AG04449 (cell line): ENCODE measurements at regions of chr12 and their contacts with region 1.

Region 1: DNA sequence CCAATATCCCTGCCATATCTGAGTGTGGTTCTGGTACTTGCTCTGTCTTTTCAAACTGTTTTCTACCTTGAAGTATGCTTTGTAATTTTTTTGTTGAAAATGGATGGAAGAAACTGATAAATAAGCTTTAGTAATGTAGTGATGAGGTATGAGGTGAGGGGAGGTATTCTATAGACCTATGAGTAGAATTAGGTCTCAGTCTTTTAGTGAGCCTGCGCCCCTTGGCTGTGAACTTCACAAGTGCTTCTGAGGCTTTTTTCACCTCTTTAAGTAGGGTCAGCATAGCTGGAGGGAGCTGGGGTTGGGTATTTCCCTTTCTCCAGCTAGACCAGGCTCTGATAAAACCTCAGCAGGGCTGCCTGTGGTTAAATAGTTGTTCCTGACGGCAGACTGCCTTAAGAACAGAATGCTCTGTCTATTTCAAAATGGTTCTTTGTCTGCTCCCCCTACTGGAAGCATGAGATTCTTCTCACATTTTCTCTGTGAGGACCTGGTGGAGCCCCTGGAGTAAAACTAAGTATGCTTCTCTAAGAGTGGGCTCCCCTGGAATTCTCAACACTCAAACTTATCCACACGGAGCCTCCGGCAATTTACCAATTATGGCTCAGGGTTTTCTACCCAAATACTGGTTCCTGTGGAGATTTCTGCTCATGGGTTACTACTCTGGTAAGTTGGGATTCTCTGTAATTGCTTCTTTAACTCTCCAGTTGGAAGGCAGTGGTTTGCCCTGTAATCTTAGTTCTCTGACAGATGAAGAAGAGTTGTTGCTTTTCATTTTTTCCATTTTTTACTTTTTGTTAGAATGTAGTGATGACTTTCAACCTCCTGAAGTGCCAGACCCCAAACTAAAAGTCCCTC is 13.1 kb downstream of the KRT5 start:
- DNase-seq: peak; percentile 51
- H3K4me3 ChIP-seq: no peak overlapping the region
- CTCF ChIP-seq: peak; percentile 46

Region 2: DNA sequence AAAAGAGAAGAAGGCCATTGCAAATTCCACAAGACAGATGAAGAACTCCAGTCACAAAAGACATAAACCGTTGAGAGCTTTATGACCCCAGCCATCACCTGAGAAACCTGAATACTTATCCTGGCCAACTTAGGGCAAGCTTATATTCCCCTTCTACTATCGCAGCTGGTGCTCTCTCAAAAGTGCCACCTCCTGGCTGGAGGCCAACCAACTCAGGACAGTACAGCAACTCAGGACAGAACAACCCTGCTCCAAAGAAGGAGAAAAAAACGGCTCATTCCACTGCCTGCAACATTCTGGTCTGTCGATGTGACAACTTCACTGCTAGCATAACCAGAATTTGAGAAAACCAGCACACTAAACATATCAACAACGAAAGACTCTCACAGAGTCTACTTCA is 45.4 kb before region 1 on chr12:
- CTCF ChIA-PET with region 1: no interaction called
- POLR2A ChIA-PET with region 1: no interaction called
- DNase-seq: no peak
- H3K4me3 ChIP-seq: no peak overlapping the region
- CTCF ChIP-seq: no peak

Region 3: GRCh38 chr12:52495389-52495788 is 11.7 kb before region 1 on chr12:
- CTCF ChIA-PET with region 1: interaction called, 18 read pairs
- POLR2A ChIA-PET with region 1: no interaction called
- DNase-seq: no peak
- H3K4me3 ChIP-seq: no peak overlapping the region
- CTCF ChIP-seq: no peak

Region 4: DNA sequence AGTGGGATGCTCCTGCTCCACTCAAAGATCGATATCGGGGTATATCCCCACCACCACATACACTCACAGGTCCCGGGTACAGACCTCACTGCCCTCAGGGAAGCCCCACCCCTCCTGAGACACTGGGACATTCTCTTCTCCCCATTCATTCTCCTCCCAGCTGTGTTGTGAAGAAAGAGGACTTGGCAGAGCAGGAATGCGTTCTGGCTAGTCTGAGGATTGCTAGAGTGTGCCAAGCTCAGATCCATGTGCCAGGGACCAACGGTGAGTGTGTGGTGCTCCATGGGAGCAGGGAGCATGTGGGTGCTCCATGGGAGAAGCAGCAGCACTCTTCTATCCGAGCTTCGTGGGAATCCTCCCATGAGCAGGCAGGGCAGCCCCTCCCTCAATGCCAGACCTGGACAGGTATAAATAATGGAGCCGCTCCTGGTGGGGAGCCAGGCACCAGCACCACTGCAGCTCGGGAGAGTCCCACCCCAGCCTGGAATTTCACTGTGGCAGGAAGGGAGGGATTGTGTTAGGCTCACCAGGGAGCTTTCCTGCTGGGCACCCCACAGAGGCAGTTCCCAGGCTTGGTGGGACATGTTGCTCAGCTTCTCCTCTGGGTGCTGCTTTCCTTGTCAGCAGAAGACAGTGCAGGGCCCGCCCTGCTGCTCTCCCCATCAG is 15.4 kb after region 1 on chr12:
- CTCF ChIA-PET with region 1: interaction called, 48 read pairs
- POLR2A ChIA-PET with region 1: no interaction called
- DNase-seq: no peak
- H3K4me3 ChIP-seq: no peak overlapping the region
- CTCF ChIP-seq: no peak

Region 5: GRCh38 chr12:52561880-52562449 is 54.9 kb after region 1 on chr12:
- CTCF ChIA-PET with region 1: no interaction called
- POLR2A ChIA-PET with region 1: no interaction called
- DNase-seq: no peak
- H3K4me3 ChIP-seq: no peak overlapping the region
- CTCF ChIP-seq: peak; percentile 12